Activated naive CD4-positive, alpha-beta T cell treated with anti-CD3 and anti-CD28 coated beads, Interleukin-2, amount 10 ng/mL, durations not matched to agents 7 days and 5 days (primary cell): ENCODE measurements at regions of chr3 and their contacts with region 1.

Region 1: GRCh38 chr3:151168269-151169094 is 34.5 kb downstream of the GPR171 start:
- DNase-seq: peak; percentile 89
- H3K4me3 Mint-ChIP-seq: no peak overlapping the region
- H3K27ac Mint-ChIP-seq: peak overlapping the region; percentile 68
- H3K4me1 Mint-ChIP-seq: peaks cover 52% of the 10 kb centered on the region
- H3K27me3 Mint-ChIP-seq: no peaks in the 10 kb centered on the region

Region 2: GRCh38 chr3:151156618-151157216 is 11.8 kb before region 1 on chr3:
- CTCF ChIA-PET with region 1: interaction called, 10 read pairs
- DNase-seq: peak; percentile 50
- H3K4me3 Mint-ChIP-seq: no peak overlapping the region
- H3K27ac Mint-ChIP-seq: no peak overlapping the region
- H3K4me1 Mint-ChIP-seq: no peaks in the 10 kb centered on the region
- H3K27me3 Mint-ChIP-seq: peaks cover 17% of the 10 kb centered on the region

Region 3: GRCh38 chr3:151199554-151200438 is 31.3 kb after region 1 on chr3:
- CTCF ChIA-PET with region 1: interaction called, 20 read pairs
- DNase-seq: no peak
- H3K4me3 Mint-ChIP-seq: peak overlapping the region; percentile 88
- H3K27ac Mint-ChIP-seq: peak overlapping the region; percentile 98
- H3K4me1 Mint-ChIP-seq: peaks cover 46% of the 10 kb centered on the region
- H3K27me3 Mint-ChIP-seq: no peaks in the 10 kb centered on the region

Region 4: DNA sequence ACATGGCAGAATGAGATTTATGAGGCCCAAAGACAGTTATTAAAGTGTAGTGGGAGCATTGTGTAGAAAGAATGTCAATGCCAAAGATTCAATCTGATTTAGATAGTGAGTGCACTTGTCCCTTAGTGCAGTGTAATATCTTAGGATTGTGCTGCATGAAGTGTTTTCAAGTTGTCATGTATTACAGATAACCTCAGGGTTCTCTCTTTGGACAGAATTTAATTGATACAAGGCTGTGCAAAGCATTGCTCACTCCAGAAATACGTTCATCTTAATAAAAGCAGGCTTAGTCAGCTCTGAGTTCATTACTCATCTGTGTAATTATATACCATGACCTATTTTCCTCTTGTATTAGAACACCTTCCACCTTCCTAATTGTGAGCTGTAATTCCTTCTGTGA is 50.6 kb after region 1 on chr3:
- CTCF ChIA-PET with region 1: interaction called, 147 read pairs
- DNase-seq: no peak
- H3K4me3 Mint-ChIP-seq: no peak overlapping the region
- H3K27ac Mint-ChIP-seq: no peak overlapping the region
- H3K4me1 Mint-ChIP-seq: no peaks in the 10 kb centered on the region
- H3K27me3 Mint-ChIP-seq: peaks cover 5% of the 10 kb centered on the region

Region 5: GRCh38 chr3:151234825-151235224 is 66.3 kb after region 1 on chr3:
- CTCF ChIA-PET with region 1: interaction called, 147 read pairs
- DNase-seq: no peak
- H3K4me3 Mint-ChIP-seq: no peak overlapping the region
- H3K27ac Mint-ChIP-seq: no peak overlapping the region
- H3K4me1 Mint-ChIP-seq: peaks cover 22% of the 10 kb centered on the region
- H3K27me3 Mint-ChIP-seq: peaks cover 4% of the 10 kb centered on the region

Region 6: GRCh38 chr3:151327571-151328198 is 159.2 kb after region 1 on chr3:
- CTCF ChIA-PET with region 1: interaction called, 12 read pairs
- DNase-seq: no peak
- H3K4me3 Mint-ChIP-seq: no peak overlapping the region
- H3K27ac Mint-ChIP-seq: no peak overlapping the region
- H3K4me1 Mint-ChIP-seq: peaks cover 7% of the 10 kb centered on the region
- H3K27me3 Mint-ChIP-seq: peaks cover 8% of the 10 kb centered on the region

Region 7: GRCh38 chr3:151445273-151446001 is 277.0 kb after region 1 on chr3:
- CTCF ChIA-PET with region 1: no interaction called
- DNase-seq: no peak
- H3K4me3 Mint-ChIP-seq: no peak overlapping the region
- H3K27ac Mint-ChIP-seq: no peak overlapping the region
- H3K4me1 Mint-ChIP-seq: no peaks in the 10 kb centered on the region
- H3K27me3 Mint-ChIP-seq: no peaks in the 10 kb centered on the region